ENCODE measurements at regions of chr20 and their contacts with region 1.

Region 1: DNA sequence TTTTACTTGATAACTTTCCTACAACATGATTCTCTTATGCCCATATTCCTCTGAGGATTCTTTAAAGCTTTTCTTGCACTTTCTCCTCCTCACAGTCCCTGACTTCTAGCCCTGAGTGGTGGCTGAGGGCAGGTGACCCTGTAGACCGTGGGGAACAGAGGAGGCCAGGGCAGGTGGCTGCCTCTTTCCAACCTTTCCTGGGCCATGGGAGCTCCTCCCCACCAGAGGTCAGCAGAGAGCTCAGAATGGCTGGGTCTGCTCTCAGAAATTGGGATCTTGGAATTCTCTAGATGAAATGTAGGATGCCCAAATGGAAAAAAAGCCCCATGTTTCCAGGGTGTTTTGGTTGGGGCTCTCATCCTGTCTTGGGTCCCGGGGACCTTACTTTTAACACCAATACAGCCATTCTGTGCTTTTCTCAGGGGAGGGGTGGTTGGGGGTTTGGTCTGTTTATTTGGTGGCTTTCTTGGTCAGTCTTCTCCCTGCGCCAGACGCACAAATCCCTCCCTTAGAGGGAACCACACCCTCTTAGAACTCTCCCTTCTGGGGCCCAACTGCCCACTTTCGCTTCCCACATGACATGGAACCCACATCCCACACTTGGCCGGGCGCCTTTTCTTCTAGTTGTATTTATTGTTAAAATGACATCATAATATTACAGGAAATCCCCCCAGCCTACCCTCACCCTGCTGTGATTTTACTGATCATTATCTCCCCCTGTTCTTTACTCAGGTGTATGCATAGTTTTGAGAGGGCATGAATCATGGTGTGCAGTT is 17.9 kb downstream of the GNAS start:
- DNase-seq: no peak
- H3K4me3 ChIP-seq: no peak overlapping the region
- CTCF ChIP-seq: peak; percentile 94

Region 2: GRCh38 chr20:58980700-58981627 is 110.5 kb after region 1 on chr20 and contains the start of gene NELFCD:
- CTCF ChIA-PET with region 1: interaction called, 13 read pairs
- POLR2A ChIA-PET with region 1: no interaction called
- DNase-seq: no peak
- H3K4me3 ChIP-seq: peak within 1 kb of the TSS; percentile 74
- CTCF ChIP-seq: no peak

Region 3: DNA sequence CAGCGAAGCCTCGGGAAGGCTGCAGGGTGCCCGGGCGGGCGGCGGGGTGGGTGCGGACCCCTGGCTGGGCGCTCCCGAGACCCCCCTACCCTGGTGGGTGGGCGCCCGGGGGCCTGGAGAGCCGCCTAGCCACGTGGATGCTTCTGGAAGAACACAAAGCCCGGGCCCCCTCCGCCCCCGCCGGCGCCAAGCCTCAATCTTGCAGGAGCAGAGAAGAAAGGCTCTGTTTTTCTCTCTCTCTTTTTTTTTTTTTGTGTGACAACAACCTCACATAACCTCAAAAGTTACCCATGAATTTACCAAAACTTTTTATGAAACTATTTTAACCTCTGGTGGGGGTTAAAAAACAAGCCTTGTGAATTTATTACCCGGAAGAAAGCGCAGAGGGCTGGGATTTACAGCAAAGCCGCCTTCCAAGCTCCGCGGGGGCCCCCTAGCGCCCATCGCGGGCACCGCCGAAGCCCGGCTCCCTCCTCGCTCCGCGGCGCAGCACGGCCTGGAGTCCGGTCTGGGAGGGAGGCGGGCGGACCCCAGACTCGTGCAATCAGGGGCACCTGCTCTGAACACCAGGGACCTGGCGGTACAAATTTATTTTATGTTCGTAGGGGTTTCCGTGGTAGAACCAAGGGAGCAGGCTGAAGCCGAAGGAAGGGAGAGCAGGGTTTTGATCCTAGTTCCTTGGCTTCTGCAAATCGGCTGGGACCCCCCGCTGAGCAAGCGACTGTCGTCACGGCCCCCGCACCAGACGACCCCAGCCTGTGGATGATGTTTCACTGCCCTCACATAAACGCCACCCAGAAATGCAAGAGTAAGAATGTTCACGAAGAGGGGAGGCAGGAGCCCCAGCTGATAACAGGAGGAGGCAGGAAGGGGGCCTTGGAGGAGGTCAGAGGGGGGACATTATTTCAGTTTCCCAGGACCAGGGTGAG is 352.1 kb after region 1 on chr20:
- CTCF ChIA-PET with region 1: interaction called, 114 read pairs
- POLR2A ChIA-PET with region 1: no interaction called
- DNase-seq: peak; percentile 12
- H3K4me3 ChIP-seq: peak overlapping the region; percentile 48
- CTCF ChIP-seq: peak; percentile 94

Region 4: GRCh38 chr20:59322899-59323454 is 452.6 kb after region 1 on chr20:
- CTCF ChIA-PET with region 1: no interaction called
- POLR2A ChIA-PET with region 1: no interaction called
- DNase-seq: no peak
- H3K4me3 ChIP-seq: no peak overlapping the region
- CTCF ChIP-seq: no peak

Region 5: GRCh38 chr20:59447846-59448635 is 577.6 kb after region 1 on chr20:
- CTCF ChIA-PET with region 1: interaction called, 89 read pairs
- POLR2A ChIA-PET with region 1: no interaction called
- DNase-seq: no peak
- H3K4me3 ChIP-seq: no peak overlapping the region
- CTCF ChIP-seq: no peak

Region 6: GRCh38 chr20:59461526-59461925 is 591.1 kb after region 1 on chr20:
- CTCF ChIA-PET with region 1: interaction called, 89 read pairs
- POLR2A ChIA-PET with region 1: no interaction called
- DNase-seq: no peak
- H3K4me3 ChIP-seq: no peak overlapping the region
- CTCF ChIP-seq: no peak